Transverse colon (tissue), 4 donors: ENCODE measurements at regions of chr12 and their contacts with region 1.

Region 1: DNA sequence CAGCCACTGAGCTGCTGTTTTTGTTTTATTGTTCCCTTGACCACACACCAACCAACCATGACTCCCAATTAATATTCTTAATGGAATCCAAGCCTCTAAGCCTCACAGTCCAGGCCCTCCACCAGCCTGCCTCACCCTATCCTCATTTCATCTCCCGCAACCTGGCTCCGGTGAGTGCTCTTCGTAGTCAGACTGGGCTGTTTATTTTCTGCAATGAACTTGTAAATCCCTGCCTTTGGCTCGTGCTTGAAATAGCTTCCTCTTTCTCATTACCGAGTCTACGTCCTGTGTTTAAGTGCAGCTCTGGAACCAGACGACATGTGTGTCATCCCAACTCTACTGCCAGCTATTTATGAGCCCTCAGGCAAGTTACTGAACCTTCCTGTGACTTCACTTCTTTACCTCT is 12.4 kb upstream of the ETFBKMT start:
- DNase-seq: no peak
- H3K4me3 ChIP-seq: no peak overlapping the region
- H3K27ac ChIP-seq: no peak overlapping the region
- H3K4me1 ChIP-seq: peaks cover 0 to 20% (median 8%) of the 10 kb centered on the region in 4 donors
- H3K27me3 ChIP-seq: no peaks in the 10 kb centered on the region
- CTCF ChIP-seq: no peak
- EP300 ChIP-seq: no peak
- POLR2A ChIP-seq: no peak

Region 2: GRCh38 chr12:31259136-31259886 is 387.8 kb before region 1 on chr12:
- in situ Hi-C with region 1: no loop called
- intact Hi-C with region 1: no loop called
- DNase-seq: no peak
- H3K4me3 ChIP-seq: no peak overlapping the region
- H3K27ac ChIP-seq: no peak overlapping the region
- H3K4me1 ChIP-seq: no peaks in the 10 kb centered on the region
- H3K27me3 ChIP-seq: no peaks in the 10 kb centered on the region
- CTCF ChIP-seq: no peak
- EP300 ChIP-seq: no peak
- POLR2A ChIP-seq: no peak

Region 3: GRCh38 chr12:31316891-31317290 is 330.2 kb before region 1 on chr12:
- in situ Hi-C with region 1: no loop called
- intact Hi-C with region 1: no loop called
- DNase-seq: no peak
- H3K4me3 ChIP-seq: peak overlapping the region in 1 of 4 donors; percentile 38
- H3K27ac ChIP-seq: peak overlapping the region; percentile 56 to 75 (median 66)
- H3K4me1 ChIP-seq: peaks cover 16 to 49% (median 25%) of the 10 kb centered on the region in 4 donors
- H3K27me3 ChIP-seq: no peaks in the 10 kb centered on the region
- CTCF ChIP-seq: no peak
- EP300 ChIP-seq: no peak
- POLR2A ChIP-seq: no peak

Region 4: DNA sequence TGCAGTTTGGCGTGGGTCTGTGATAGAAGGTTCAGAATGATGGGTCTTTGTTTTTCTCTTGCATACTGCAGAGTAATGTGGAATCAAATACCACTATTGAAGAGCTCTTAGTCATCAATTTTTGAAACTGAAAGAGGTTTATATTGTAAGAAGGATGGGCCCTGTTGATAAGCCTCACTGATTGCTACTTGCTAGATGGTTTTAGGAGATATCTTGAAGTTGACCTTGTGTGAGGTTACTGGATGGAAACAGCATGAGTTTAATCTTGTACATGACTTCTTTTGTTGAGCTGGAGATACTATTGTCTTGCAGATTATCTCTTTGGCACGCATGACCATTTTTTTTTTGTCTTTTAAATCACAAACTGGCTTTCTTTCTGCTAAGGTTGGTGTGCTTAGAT is 473.3 kb after region 1 on chr12:
- in situ Hi-C with region 1: no loop called
- intact Hi-C with region 1: no loop called
- DNase-seq: no peak
- H3K4me3 ChIP-seq: no peak overlapping the region
- H3K27ac ChIP-seq: no peak overlapping the region
- H3K4me1 ChIP-seq: peaks cover 0 to 7% (median 3%) of the 10 kb centered on the region in 4 donors
- H3K27me3 ChIP-seq: no peaks in the 10 kb centered on the region
- CTCF ChIP-seq: no peak
- EP300 ChIP-seq: no peak
- POLR2A ChIP-seq: no peak

Region 5: DNA sequence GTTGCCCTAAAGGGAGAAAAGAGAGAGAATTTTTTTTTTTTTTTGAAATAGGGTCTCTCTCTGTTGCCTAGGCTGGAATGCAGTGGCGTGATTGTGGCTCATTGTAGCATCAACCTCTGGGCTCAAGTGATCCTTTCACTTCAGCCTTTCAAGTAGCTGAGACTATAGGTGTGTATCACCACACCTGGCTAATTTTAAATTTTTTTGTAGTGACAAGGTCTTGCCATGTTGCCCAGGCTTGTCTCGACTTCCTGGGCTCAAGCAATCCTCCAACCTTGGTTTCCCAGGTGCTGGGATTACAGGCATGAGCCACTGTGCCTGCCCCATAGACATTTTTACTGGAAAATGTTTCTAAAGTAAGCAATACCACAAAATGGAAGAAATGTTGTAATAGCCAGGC is 1071.8 kb after region 1 on chr12:
- in situ Hi-C with region 1: no loop called
- intact Hi-C with region 1: no loop called
- DNase-seq: no peak
- H3K4me3 ChIP-seq: no peak overlapping the region
- H3K27ac ChIP-seq: no peak overlapping the region
- H3K4me1 ChIP-seq: no peaks in the 10 kb centered on the region
- H3K27me3 ChIP-seq: no peaks in the 10 kb centered on the region
- CTCF ChIP-seq: no peak
- EP300 ChIP-seq: no peak
- POLR2A ChIP-seq: no peak

Region 6: DNA sequence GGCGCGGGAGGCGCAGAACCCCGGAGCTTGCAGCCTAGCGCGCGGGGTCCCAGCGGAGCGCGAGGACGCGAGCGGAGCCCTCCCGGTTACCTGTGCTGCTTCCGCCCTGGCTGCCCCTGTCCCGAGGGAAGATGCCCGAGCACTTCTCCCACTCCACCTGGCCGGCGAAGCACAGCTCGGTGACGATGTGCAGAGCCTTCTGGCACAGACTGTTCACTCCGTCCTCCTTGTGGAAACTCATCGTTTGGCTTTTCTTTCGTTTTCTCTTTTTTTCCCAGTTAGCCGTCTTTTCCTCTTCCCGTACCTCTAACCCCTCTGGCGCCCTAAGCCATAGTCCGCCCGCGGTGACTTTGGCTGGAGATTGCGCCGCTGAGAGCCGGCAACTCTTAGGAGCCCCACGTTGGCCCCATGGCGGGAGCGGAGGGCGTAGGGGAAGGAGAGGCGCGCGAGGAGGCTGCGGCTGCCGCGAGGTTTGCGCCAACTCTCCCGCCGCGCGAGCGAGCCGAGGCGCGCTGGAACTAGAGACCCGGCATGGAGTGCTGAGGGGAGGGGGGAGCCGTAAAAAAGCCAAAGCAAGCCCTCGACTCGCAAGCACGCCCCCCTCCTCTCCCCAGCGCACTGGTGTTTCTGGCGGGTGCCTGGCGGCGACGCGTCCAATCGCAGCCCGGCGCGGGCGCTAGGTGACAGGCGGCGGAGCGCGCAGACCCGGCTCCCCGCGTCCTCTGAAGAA is 1792.4 kb after region 1 on chr12 and contains the start of gene SYT10:
- in situ Hi-C with region 1: no loop called
- intact Hi-C with region 1: loop called (anchors 5 kb)
- DNase-seq: no peak
- H3K4me3 ChIP-seq: peak within 1 kb of the TSS; percentile 25 to 59 (median 36)
- H3K27ac ChIP-seq: peak within 1 kb of the TSS in 1 of 4 donors; percentile 17
- H3K4me1 ChIP-seq: peaks cover 0 to 8% (median 4%) of the 10 kb centered on the region in 4 donors
- H3K27me3 ChIP-seq: peaks cover 61% of the 10 kb centered on the region
- CTCF ChIP-seq: no peak
- EP300 ChIP-seq: no peak
- POLR2A ChIP-seq: no peak
- total RNA-seq, gene SYT10: 0.48 to 1.6 (median 0.96) TPM in 3 of 4 donors, not detected in the other